ENCODE measurements at regions of chr9 and their contacts with region 1.

Region 1: GRCh38 chr9:81724242-81724889 is 35.0 kb upstream of the TLE1 start:
- H3K4me3 ChIP-seq: no peak overlapping the region
- H3K27ac ChIP-seq: peak overlapping the region; percentile 72
- H3K4me1 ChIP-seq: peaks cover 3% of the 10 kb centered on the region; the same call in 1 of the 2 replicates
- CTCF ChIP-seq: no peak

Region 2: DNA sequence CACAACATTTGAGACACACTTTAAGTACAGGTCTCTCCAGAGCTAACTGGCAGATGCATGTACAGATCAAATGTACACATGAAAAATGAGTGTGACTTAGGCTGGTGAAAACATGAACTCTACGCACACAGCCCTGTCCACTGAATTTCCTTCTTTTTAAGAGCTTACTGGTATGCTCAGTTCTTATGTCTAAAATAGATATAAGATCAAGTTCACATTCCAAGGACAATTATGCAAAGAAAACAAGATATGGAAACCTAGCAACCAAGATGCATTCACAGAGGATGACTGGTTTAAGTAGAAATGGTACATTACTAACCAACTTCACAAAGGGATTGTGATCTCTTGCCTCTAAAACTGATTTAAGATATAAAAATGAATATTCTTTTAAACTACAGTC is 91.8 kb before region 1 on chr9:
- CTCF ChIA-PET with region 1: no interaction called
- POLR2A ChIA-PET with region 1: no interaction called
- H3K4me3 ChIP-seq: no peak overlapping the region
- H3K27ac ChIP-seq: no peak overlapping the region
- H3K4me1 ChIP-seq: peaks cover under 1% of the 10 kb centered on the region; the same call in 1 of the 2 replicates
- CTCF ChIP-seq: no peak

Region 3: DNA sequence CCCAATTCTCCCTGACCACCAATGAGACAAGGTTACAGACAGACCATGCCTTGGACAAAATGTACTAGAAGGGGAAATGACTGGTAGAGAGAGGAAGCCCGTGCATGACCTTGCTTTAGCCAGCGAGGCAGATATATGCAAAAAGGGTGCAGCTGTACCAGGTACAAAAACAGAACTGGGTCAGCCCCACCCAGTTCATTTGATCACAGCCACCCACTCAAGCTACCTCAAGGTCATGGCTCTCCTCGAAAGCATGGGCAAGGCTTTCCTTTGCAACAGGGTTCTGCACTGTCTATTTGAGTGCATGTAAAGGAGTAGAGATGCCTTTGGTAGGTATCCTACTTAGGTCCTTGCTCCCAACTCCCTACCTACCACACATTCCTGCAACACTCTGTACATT is 68.4 kb before region 1 on chr9:
- CTCF ChIA-PET with region 1: no interaction called
- POLR2A ChIA-PET with region 1: no interaction called
- H3K4me3 ChIP-seq: no peak overlapping the region
- H3K27ac ChIP-seq: no peak overlapping the region
- H3K4me1 ChIP-seq: no peaks in the 10 kb centered on the region; the same call in 1 of the 2 replicates
- CTCF ChIP-seq: no peak

Region 4: GRCh38 chr9:81689343-81690190 is 34.8 kb before region 1 on chr9 and contains the start of gene TLE1:
- CTCF ChIA-PET with region 1: no interaction called
- POLR2A ChIA-PET with region 1: interaction called, 13 read pairs
- H3K4me3 ChIP-seq: peak within 1 kb of the TSS; percentile 97
- H3K27ac ChIP-seq: peak within 1 kb of the TSS; percentile 97
- H3K4me1 ChIP-seq: peaks cover 15% of the 10 kb centered on the region
- CTCF ChIP-seq: no peak